Activated CD4-positive, alpha-beta T cell treated with anti-CD3 and anti-CD28 coated beads for 36 hours (primary cell): ENCODE measurements at regions of chr6 and their contacts with region 1.

Region 1: DNA sequence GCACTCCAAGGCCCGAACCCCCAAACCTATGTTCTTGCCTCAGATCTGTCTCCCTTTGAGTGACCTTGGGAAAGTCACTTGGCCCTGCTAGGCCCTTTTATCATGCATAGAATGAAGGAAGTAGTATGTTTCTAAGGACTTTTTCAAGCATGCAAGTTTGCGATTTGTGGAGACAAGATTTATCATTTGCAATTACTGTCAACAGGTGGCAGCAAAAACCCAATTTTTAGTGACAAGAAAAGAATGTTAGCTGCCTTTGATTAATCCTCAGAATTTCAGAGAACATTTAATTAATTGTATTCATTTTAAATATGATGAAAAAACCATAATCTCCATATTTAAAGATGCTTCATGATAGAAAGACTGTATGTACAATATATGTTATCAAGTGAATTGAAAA is 28.3 kb upstream of the PREP start:
- DNase-seq: no peak
- ATAC-seq: no peak
- H3K4me3 Mint-ChIP-seq: no peak overlapping the region
- H3K27ac Mint-ChIP-seq: no peak overlapping the region
- H3K4me1 Mint-ChIP-seq: no peaks in the 10 kb centered on the region
- H3K27me3 Mint-ChIP-seq: peaks cover 6% of the 10 kb centered on the region

Region 2: GRCh38 chr6:105459049-105459448 is 27.8 kb after region 1 on chr6:
- CTCF ChIA-PET with region 1: interaction called, 11 read pairs
- POLR2A ChIA-PET with region 1: no interaction called
- intact Hi-C with region 1: no loop called
- DNase-seq: peak; percentile 53
- ATAC-seq: peak; percentile 84
- H3K4me3 Mint-ChIP-seq: peak overlapping the region; percentile 5
- H3K27ac Mint-ChIP-seq: peak overlapping the region; percentile 76
- H3K4me1 Mint-ChIP-seq: peaks cover 10% of the 10 kb centered on the region
- H3K27me3 Mint-ChIP-seq: peaks cover 21% of the 10 kb centered on the region

Region 3: GRCh38 chr6:105726907-105727655 is 295.9 kb after region 1 on chr6:
- CTCF ChIA-PET with region 1: interaction called, 13 read pairs
- POLR2A ChIA-PET with region 1: no interaction called
- intact Hi-C with region 1: loop called in 1 of 2 experiments (anchors 5 kb)
- DNase-seq: no peak
- ATAC-seq: no peak
- H3K4me3 Mint-ChIP-seq: no peak overlapping the region
- H3K27ac Mint-ChIP-seq: no peak overlapping the region
- H3K4me1 Mint-ChIP-seq: no peaks in the 10 kb centered on the region
- H3K27me3 Mint-ChIP-seq: peaks cover 6% of the 10 kb centered on the region

Region 4: GRCh38 chr6:106300944-106301343 is 869.7 kb after region 1 on chr6:
- CTCF ChIA-PET with region 1: no interaction called
- POLR2A ChIA-PET with region 1: no interaction called
- intact Hi-C with region 1: loop called in 1 of 2 experiments (anchors 2 kb)
- DNase-seq: no peak
- ATAC-seq: no peak
- H3K4me3 Mint-ChIP-seq: no peak overlapping the region
- H3K27ac Mint-ChIP-seq: no peak overlapping the region
- H3K4me1 Mint-ChIP-seq: peaks cover 7% of the 10 kb centered on the region
- H3K27me3 Mint-ChIP-seq: no peaks in the 10 kb centered on the region